Activated CD4-positive, alpha-beta T cell treated with anti-CD3 and anti-CD28 coated beads for 36 hours (primary cell): ENCODE measurements at regions of chr2 and their contacts with region 1.

Region 1: GRCh38 chr2:200811336-200812121 is at the start of gene BZW1:
- DNase-seq: peak; percentile 98
- ATAC-seq: peak; percentile 79
- H3K4me3 Mint-ChIP-seq: peak within 1 kb of the TSS; percentile 87
- H3K27ac Mint-ChIP-seq: peak within 1 kb of the TSS; percentile 96
- H3K4me1 Mint-ChIP-seq: peaks cover 45% of the 10 kb centered on the region
- H3K27me3 Mint-ChIP-seq: no peaks in the 10 kb centered on the region
- total RNA-seq, gene BZW1: 413 to 474 TPM

Region 2: GRCh38 chr2:199955339-199956261 is 855.9 kb before region 1 on chr2 and contains the starts of genes MAIP1 and TYW5:
- CTCF ChIA-PET with region 1: no interaction called
- POLR2A ChIA-PET with region 1: no interaction called
- intact Hi-C with region 1: loop called in 1 of 2 experiments (anchors 1 kb)
- DNase-seq: peak; percentile 87
- ATAC-seq: peak; percentile 87
- H3K4me3 Mint-ChIP-seq: peak within 1 kb of the TSS; percentile 99
- H3K27ac Mint-ChIP-seq: peak within 1 kb of the TSS; percentile 95
- H3K4me1 Mint-ChIP-seq: peaks cover 50% of the 10 kb centered on the region
- H3K27me3 Mint-ChIP-seq: no peaks in the 10 kb centered on the region
- total RNA-seq, gene MAIP1: 26.1 to 27.5 TPM
- total RNA-seq, gene TYW5: 9.6 to 10.1 TPM

Region 3: GRCh38 chr2:200172944-200173581 is 638.5 kb before region 1 on chr2:
- CTCF ChIA-PET with region 1: no interaction called
- POLR2A ChIA-PET with region 1: no interaction called
- intact Hi-C with region 1: no loop called
- DNase-seq: no peak
- ATAC-seq: no peak
- H3K4me3 Mint-ChIP-seq: no peak overlapping the region
- H3K27ac Mint-ChIP-seq: no peak overlapping the region
- H3K4me1 Mint-ChIP-seq: no peaks in the 10 kb centered on the region
- H3K27me3 Mint-ChIP-seq: peaks cover 2% of the 10 kb centered on the region

Region 4: GRCh38 chr2:200578778-200579177 is 232.8 kb before region 1 on chr2:
- CTCF ChIA-PET with region 1: no interaction called
- POLR2A ChIA-PET with region 1: no interaction called
- intact Hi-C with region 1: loop called in 1 of 2 experiments (anchors 5 kb)
- DNase-seq: no peak
- ATAC-seq: peak; percentile 83
- H3K4me3 Mint-ChIP-seq: no peak overlapping the region
- H3K27ac Mint-ChIP-seq: no peak overlapping the region
- H3K4me1 Mint-ChIP-seq: peaks cover 17% of the 10 kb centered on the region
- H3K27me3 Mint-ChIP-seq: no peaks in the 10 kb centered on the region

Region 5: DNA sequence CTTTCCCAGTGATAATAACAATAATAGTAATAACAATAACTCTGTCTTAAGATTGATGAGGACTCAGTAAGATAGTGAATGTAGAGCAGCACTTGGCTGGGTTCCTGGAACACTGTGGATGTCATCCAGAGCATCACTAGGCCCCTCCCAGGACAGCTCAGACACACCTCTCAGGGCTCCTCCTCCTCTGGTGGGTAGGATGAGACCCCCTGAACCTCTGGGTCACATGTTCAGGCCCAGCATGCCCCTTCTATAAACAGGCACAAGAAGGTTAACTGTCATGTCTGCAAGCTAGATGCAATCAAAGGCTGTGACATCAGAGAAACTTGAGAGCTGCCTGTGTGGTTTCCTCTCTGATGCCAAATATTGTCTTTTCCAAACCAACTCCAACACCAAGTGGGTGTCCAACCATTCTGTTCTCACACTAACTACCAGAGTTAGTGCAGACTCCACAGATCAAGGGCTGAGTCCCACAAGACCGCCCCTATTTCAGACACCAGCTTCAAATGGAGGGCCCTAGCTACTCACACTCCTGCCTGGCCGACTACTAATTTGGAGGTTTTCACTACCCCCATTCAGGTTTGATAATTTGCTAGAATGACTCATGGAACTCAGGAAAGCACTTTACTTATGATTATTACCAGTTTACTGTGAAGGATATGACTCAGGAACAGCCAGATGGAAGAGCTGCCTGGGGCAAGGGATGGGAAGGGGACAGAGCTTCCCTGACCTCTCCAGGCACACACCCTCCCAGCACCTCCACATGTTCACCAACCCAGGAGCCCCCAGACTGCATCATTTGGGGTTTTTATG is 46.2 kb before region 1 on chr2:
- CTCF ChIA-PET with region 1: interaction called, 8 read pairs
- POLR2A ChIA-PET with region 1: interaction called, 4 read pairs
- intact Hi-C with region 1: loop called (anchors 1 kb)
- DNase-seq: peak; percentile 69
- ATAC-seq: peak; percentile 90
- H3K4me3 Mint-ChIP-seq: peak overlapping the region; percentile 7
- H3K27ac Mint-ChIP-seq: peak overlapping the region; percentile 82
- H3K4me1 Mint-ChIP-seq: peaks cover 30% of the 10 kb centered on the region
- H3K27me3 Mint-ChIP-seq: no peaks in the 10 kb centered on the region

Region 6: DNA sequence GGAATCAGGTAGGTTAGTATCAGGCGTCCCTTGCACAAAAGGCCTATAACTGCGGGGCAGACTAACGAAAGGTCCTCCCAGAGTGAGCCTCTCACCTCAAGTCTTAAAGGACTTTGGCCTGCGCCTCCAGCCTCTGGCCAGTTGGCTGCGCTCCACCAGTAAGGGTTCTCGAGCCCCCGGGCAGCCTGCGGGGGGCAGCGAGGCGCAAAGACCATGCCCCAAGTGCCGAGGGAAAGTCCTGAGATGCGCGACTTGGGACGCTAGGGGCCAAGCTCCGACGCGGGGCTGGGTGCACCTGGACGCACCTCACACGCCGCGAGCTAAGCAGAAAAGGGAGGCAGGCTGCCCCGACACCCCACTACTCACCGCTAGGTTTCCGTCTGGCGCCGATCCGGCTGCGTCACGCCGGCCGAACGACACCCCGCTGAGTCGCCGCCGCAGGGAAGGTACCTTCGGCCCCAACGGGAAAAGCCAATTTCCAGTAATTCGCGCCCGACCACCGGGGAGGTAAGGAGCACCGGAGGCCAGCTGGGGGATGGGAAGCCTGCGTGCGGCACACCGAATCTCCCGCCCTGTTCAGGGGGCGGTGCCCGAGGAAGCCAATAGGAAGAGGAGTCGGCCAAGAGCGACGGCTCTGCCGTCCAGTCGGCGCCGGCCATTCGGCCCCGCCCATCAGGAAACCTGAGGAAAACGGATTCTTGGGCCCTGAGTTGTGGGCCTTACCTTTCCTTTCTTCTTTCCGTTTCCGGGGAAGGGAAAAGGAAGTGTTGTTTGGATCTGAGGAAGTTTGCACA is 151.8 kb after region 1 on chr2 and contains the start of gene ORC2:
- CTCF ChIA-PET with region 1: no interaction called
- POLR2A ChIA-PET with region 1: no interaction called
- intact Hi-C with region 1: loop called in 1 of 2 experiments (anchors 1 kb)
- DNase-seq: peak; percentile 95
- ATAC-seq: peak; percentile 95
- H3K4me3 Mint-ChIP-seq: peak within 1 kb of the TSS; percentile 92
- H3K27ac Mint-ChIP-seq: peak within 1 kb of the TSS; percentile 96
- H3K4me1 Mint-ChIP-seq: peaks cover 65% of the 10 kb centered on the region
- H3K27me3 Mint-ChIP-seq: no peaks in the 10 kb centered on the region
- total RNA-seq, gene ORC2: 68.5 to 80.5 TPM

Region 7: DNA sequence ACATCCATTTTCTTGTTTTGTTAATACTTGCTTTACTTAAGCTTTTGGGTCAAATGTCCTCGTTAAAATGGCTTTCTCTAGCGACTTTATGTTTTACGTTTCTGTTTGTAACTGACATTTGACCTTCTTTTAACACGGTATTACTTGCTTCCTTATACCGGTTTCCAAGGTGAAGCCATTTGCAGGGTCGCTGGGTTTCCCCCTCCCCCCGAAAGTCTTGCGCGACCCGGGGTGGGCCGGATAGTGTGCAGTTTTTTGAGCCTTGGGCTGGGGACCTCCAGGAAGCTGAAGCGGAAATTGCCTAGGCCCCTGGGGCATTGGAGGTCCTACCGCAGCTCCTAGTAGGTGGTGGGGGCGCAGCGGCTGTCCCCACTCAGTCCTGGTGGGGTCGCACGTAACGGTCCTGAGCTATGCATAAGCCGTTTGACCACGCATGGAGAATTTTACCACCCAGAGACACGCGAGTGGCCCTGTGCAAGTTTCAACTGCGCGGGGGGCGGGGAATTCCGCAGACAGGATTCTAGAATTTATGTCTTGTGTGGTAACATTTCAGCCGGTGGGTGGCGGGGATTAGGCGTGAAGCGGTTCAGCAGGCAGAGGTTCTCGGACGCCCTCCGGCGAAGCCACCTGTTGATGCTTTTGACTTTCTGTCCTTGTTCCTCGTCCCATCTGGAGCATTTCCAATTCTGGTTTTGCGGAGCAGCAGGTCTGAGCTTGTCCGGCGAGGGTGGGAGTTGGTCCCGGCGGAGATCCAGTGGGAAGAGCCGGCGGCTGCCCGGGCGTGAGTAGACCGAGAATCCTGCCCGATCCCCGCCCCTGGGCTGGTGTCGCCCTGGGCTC is 306.8 kb after region 1 on chr2:
- CTCF ChIA-PET with region 1: no interaction called
- POLR2A ChIA-PET with region 1: no interaction called
- intact Hi-C with region 1: loop called in 1 of 2 experiments (anchors 1 kb)
- DNase-seq: peak; percentile 94
- ATAC-seq: peak; percentile 37
- H3K4me3 Mint-ChIP-seq: peak overlapping the region; percentile 98
- H3K27ac Mint-ChIP-seq: peak overlapping the region; percentile 100
- H3K4me1 Mint-ChIP-seq: peaks cover 42% of the 10 kb centered on the region
- H3K27me3 Mint-ChIP-seq: no peaks in the 10 kb centered on the region

Region 8: GRCh38 chr2:201642579-201643215 is 831.2 kb after region 1 on chr2:
- CTCF ChIA-PET with region 1: no interaction called
- POLR2A ChIA-PET with region 1: no interaction called
- intact Hi-C with region 1: loop called in 1 of 2 experiments (anchors 5 kb)
- DNase-seq: peak; percentile 91
- ATAC-seq: peak; percentile 82
- H3K4me3 Mint-ChIP-seq: peak overlapping the region; percentile 79
- H3K27ac Mint-ChIP-seq: peak overlapping the region; percentile 84
- H3K4me1 Mint-ChIP-seq: peaks cover 9% of the 10 kb centered on the region
- H3K27me3 Mint-ChIP-seq: no peaks in the 10 kb centered on the region